Esophagus muscularis mucosa (tissue), 4 donors: ENCODE measurements at regions of chr20 and their contacts with region 1.

Region 1: DNA sequence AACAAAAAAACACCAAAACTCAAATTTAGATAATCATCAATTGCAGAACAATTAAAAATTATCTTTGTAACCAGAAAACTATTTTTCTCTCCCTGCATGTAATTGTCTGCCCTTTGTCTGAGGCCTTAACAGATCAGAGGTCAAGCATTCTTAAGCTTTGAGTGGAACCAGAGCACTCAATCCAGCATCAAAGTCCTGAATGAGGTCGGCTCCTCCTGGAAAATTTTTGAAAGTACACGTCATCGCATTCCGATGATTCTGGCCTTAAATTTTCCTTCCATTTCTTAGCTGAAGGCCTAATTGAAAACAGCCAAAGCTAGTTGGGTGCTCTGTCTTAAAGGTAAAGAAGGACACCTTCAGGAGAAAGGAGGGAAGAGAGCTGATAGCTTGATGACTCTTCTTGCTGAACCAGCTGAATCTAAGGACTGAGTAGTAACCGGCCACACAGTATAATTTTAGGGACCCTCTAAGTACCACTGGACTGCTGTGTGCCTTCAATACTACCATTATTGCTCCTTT is 510.2 kb upstream of the SULF2 start:
- DNase-seq: no peak
- H3K4me3 ChIP-seq: no peak overlapping the region
- H3K27ac ChIP-seq: peak overlapping the region; percentile 68 to 77 (median 76)
- H3K4me1 ChIP-seq: peaks cover 28 to 47% (median 39%) of the 10 kb centered on the region in 4 donors
- H3K27me3 ChIP-seq: no peaks in the 10 kb centered on the region
- CTCF ChIP-seq: peak; percentile 35 to 62 (median 48)
- EP300 ChIP-seq: no peak
- POLR2A ChIP-seq: no peak

Region 2: GRCh38 chr20:47677635-47678453 is 617.7 kb before region 1 on chr20:
- intact Hi-C with region 1: loop called (anchors 2 kb)
- DNase-seq: no peak
- H3K4me3 ChIP-seq: no peak overlapping the region
- H3K27ac ChIP-seq: no peak overlapping the region
- H3K4me1 ChIP-seq: peaks cover 17 to 34% (median 23%) of the 10 kb centered on the region in 4 donors
- H3K27me3 ChIP-seq: no peaks in the 10 kb centered on the region
- CTCF ChIP-seq: peak; percentile 71 to 85 (median 81)
- EP300 ChIP-seq: no peak
- POLR2A ChIP-seq: no peak